Transverse colon (tissue), 4 donors: ENCODE measurements at regions of chr9 and their contacts with region 1.

Region 1: DNA sequence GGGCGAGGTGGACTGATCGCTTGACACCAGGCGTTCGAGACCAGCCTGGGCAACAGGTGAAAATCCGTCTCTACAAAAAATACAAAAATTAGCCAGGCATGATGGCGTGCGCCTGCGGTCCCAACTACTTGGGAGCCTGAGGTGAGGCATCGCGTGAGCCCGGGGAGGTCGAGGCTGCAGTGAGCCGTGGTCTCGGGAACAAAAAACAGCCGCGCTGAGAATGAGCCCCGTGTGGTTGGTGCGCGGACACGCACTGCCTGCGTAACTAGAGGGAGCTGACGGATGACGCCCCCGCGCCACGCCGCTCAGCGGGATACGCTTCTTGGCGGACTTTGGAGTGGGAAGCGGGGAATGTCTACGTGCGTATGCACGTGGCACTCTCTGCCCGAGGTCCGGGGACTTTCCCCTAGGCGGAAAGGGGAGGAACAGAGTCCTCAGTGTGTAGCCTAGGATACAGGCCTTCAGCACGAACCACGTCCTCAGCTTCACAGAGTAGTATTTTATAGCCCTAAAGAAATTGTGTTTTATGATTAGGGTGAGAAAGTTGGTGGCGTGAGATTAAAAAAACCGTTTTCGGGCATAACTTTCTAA is at the start of gene RMRP:
- DNase-seq: peak; percentile 97
- H3K4me3 ChIP-seq: peak within 1 kb of the TSS; percentile 78 to 94 (median 85)
- H3K27ac ChIP-seq: peak within 1 kb of the TSS; percentile 95 to 99 (median 98)
- H3K4me1 ChIP-seq: peaks cover 12 to 57% (median 44%) of the 10 kb centered on the region in 4 donors
- H3K27me3 ChIP-seq: no peaks in the 10 kb centered on the region
- CTCF ChIP-seq: peak; percentile 36 to 88 (median 55)
- EP300 ChIP-seq: peak; percentile 87
- POLR2A ChIP-seq: peak; percentile 81
- total RNA-seq, gene RMRP: 1,115 to 7,222 (median 2,718) TPM

Region 2: DNA sequence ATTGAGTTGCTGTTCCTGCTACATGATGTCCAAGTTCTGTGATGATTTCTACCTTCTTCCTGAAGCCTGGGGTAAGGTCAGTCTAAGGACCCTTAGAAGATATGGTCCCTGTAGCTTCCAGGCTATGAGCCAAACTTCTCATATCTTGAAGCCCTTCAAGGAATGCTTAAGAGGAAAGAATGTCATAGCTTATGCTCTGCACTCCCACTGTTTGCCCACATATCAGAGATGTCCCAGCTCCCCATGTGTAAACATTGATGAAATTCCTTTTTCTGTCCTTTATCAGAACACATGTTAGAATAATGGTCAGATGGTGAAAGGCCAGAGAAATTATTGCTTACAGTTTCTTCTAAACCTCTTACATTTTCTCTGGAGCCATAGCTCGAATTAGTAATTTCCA is 209.1 kb before region 1 on chr9:
- in situ Hi-C with region 1: no loop called
- intact Hi-C with region 1: no loop called
- DNase-seq: no peak
- H3K4me3 ChIP-seq: no peak overlapping the region
- H3K27ac ChIP-seq: no peak overlapping the region
- H3K4me1 ChIP-seq: no peaks in the 10 kb centered on the region
- H3K27me3 ChIP-seq: no peaks in the 10 kb centered on the region
- CTCF ChIP-seq: no peak
- EP300 ChIP-seq: no peak
- POLR2A ChIP-seq: no peak

Region 3: GRCh38 chr9:35716230-35716629 is 58.6 kb after region 1 on chr9:
- in situ Hi-C with region 1: no loop called
- intact Hi-C with region 1: no loop called
- DNase-seq: no peak
- H3K4me3 ChIP-seq: no peak overlapping the region
- H3K27ac ChIP-seq: no peak overlapping the region
- H3K4me1 ChIP-seq: no peaks in the 10 kb centered on the region
- H3K27me3 ChIP-seq: no peaks in the 10 kb centered on the region
- CTCF ChIP-seq: no peak
- EP300 ChIP-seq: no peak
- POLR2A ChIP-seq: no peak

Region 4: GRCh38 chr9:35732122-35732799 is 74.6 kb after region 1 on chr9 and contains the starts of genes CREB3 and TLN1:
- in situ Hi-C with region 1: no loop called
- intact Hi-C with region 1: loop called (anchors 5 kb)
- DNase-seq: peak; percentile 99
- H3K4me3 ChIP-seq: peak within 1 kb of the TSS; percentile 67 to 87 (median 78)
- H3K27ac ChIP-seq: peak within 1 kb of the TSS; percentile 94 to 98 (median 97)
- H3K4me1 ChIP-seq: peaks cover 36 to 68% (median 56%) of the 10 kb centered on the region in 4 donors
- H3K27me3 ChIP-seq: no peaks in the 10 kb centered on the region
- CTCF ChIP-seq: no peak
- EP300 ChIP-seq: no peak
- POLR2A ChIP-seq: peak; percentile 81
- total RNA-seq, gene CREB3: 22.4 to 69.7 (median 45.5) TPM
- total RNA-seq, gene TLN1: 158 to 328 (median 177) TPM

Region 5: GRCh38 chr9:35748858-35749514 is 91.3 kb after region 1 on chr9 and contains the starts of genes GBA2 and RGP1:
- in situ Hi-C with region 1: loop called in 1 of 4 experiments (anchors 10 kb)
- intact Hi-C with region 1: no loop called
- DNase-seq: peak; percentile 91
- H3K4me3 ChIP-seq: peak within 1 kb of the TSS; percentile 20 to 93 (median 72)
- H3K27ac ChIP-seq: peak within 1 kb of the TSS; percentile 92 to 97 (median 94)
- H3K4me1 ChIP-seq: peaks cover 6 to 47% (median 38%) of the 10 kb centered on the region in 4 donors
- H3K27me3 ChIP-seq: no peaks in the 10 kb centered on the region
- CTCF ChIP-seq: no peak
- EP300 ChIP-seq: peak; percentile 20
- POLR2A ChIP-seq: peak; percentile 85
- total RNA-seq, gene GBA2: 217 to 709 (median 255) TPM
- total RNA-seq, gene RGP1: 30.3 to 47.5 (median 43.7) TPM